H1 (cell line): ENCODE measurements at regions of chr14 and their contacts with region 1.

Region 1: DNA sequence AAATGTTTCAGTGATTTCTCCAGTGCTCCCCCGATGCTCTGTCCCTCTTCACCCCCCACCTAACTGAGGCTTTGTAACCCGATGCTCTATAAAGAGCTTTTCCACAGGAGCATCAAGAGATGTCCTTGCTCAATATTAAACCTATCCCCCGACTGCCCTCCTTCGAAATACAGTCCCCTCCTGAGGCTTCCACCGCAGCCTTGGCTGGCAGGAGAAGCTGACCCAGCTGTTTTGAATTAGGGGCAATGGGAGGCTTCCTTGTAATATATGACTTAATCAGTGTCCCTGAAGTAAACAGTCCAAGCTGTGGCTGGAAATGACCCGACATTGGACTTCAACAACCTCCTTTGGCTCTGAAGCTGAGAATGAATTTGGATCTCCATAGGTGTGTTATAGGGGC is 62.4 kb downstream of the TMEM30B start:
- DNase-seq: no peak
- H3K4me3 ChIP-seq: no peak overlapping the region
- H3K27ac ChIP-seq: no peak overlapping the region
- H3K4me1 ChIP-seq: peaks cover 0 to 11% (median 6%) of the 10 kb centered on the region in 4 experiments; a peak in 4 of 7 replicates
- H3K27me3 ChIP-seq: no peaks in the 10 kb centered on the region
- CTCF ChIP-seq: no peak
- EP300 ChIP-seq: no peak
- POLR2A ChIP-seq: no peak
- RAD21 ChIP-seq: no peak

Region 2: DNA sequence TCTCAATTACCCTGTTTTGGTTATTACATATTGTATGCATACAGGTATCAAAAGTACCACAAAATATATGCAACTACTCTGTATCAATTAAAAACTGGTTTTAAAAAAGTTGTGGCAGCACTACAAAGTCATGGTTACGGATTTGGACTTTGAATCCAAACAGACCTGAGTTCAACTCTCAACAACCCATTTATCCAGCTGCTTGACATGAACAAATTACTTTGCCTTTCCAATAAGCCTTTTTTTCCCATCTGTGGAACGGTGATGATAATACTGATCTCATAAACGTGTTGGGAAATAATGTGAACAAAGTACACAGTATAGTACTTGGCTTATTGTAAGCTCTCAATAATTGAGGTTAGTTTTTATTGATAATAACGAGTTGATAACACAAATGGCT is 399.2 kb before region 1 on chr14:
- CTCF ChIA-PET with region 1: no interaction called
- POLR2A ChIA-PET with region 1: no interaction called
- DNase-seq: no peak
- H3K4me3 ChIP-seq: no peak overlapping the region
- H3K27ac ChIP-seq: no peak overlapping the region
- H3K4me1 ChIP-seq: no peaks in the 10 kb centered on the region
- H3K27me3 ChIP-seq: no peaks in the 10 kb centered on the region
- CTCF ChIP-seq: no peak
- EP300 ChIP-seq: no peak
- POLR2A ChIP-seq: no peak
- RAD21 ChIP-seq: no peak

Region 3: GRCh38 chr14:61203081-61203753 is 15.6 kb before region 1 on chr14:
- CTCF ChIA-PET with region 1: interaction called, 16 read pairs
- POLR2A ChIA-PET with region 1: no interaction called
- DNase-seq: no peak
- H3K4me3 ChIP-seq: no peak overlapping the region
- H3K27ac ChIP-seq: no peak overlapping the region
- H3K4me1 ChIP-seq: peaks cover 0 to 13% (median 7%) of the 10 kb centered on the region in 4 experiments; a peak in 3 of 7 replicates
- H3K27me3 ChIP-seq: no peaks in the 10 kb centered on the region
- CTCF ChIP-seq: no peak
- EP300 ChIP-seq: no peak
- POLR2A ChIP-seq: no peak
- RAD21 ChIP-seq: no peak

Region 4: GRCh38 chr14:61280526-61281185 is 61.9 kb after region 1 on chr14:
- CTCF ChIA-PET with region 1: no interaction called
- POLR2A ChIA-PET with region 1: no interaction called
- DNase-seq: peak in 1 of 2 experiments; percentile 79
- H3K4me3 ChIP-seq: peak overlapping the region; percentile 59 to 74 (median 62)
- H3K27ac ChIP-seq: no peak overlapping the region
- H3K4me1 ChIP-seq: peaks cover 0 to 4% (median 1%) of the 10 kb centered on the region in 4 experiments; a peak in 3 of 7 replicates
- H3K27me3 ChIP-seq: peaks cover 11 to 22% (median 19%) of the 10 kb centered on the region in 4 experiments; a peak in 6 of 7 replicates
- CTCF ChIP-seq: peak; percentile 26 to 43 (median 31)
- EP300 ChIP-seq: no peak
- POLR2A ChIP-seq: no peak
- RAD21 ChIP-seq: no peak

Region 5: DNA sequence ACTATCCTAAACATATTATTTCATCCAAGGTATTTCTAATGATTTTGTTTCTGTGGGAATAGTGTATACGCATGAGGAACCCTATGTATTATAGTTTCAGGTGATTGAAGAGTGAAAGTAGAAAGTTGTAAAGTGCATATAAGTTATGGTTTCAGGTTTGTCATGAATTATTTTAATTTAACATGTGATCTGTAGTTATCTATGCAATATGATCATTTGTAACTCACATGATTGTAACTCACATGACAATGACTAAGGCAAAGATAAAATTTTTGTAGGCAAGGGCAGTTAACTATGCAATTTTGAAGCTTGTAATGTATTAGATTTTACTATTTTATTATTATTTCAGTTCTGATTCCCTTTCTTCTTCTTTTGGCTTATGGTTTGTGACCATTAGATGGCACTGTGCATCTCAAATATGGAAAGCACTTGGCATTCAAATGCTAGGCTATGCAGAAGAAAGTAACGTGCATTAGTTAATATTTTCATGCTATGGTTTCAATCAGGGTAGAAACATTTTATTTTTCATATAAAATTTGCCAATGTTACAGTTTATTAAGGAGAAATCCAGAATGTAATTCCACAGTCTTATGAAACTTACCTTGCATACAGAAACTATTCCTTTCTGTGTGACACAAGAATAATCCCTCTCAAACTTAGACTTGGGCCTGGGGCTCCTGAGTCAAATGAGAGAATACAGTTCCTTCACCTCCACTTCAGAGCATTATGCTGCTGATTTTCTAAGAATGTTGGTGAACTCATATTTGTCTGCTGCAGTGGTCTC is 78.1 kb after region 1 on chr14:
- CTCF ChIA-PET with region 1: no interaction called
- POLR2A ChIA-PET with region 1: no interaction called
- DNase-seq: no peak
- H3K4me3 ChIP-seq: no peak overlapping the region
- H3K27ac ChIP-seq: no peak overlapping the region
- H3K4me1 ChIP-seq: peaks cover 0 to 9% (median 0%) of the 10 kb centered on the region in 4 experiments; a peak in 2 of 7 replicates
- H3K27me3 ChIP-seq: no peaks in the 10 kb centered on the region
- CTCF ChIP-seq: peak in 1 of 3 experiments; percentile 49; a peak in 1 of 4 replicates
- EP300 ChIP-seq: no peak
- POLR2A ChIP-seq: no peak
- RAD21 ChIP-seq: peak; percentile 63 to 70